Posterior vena cava (tissue), 2 donors: ENCODE measurements at regions of chr9 and their contacts with region 1.

Region 1: DNA sequence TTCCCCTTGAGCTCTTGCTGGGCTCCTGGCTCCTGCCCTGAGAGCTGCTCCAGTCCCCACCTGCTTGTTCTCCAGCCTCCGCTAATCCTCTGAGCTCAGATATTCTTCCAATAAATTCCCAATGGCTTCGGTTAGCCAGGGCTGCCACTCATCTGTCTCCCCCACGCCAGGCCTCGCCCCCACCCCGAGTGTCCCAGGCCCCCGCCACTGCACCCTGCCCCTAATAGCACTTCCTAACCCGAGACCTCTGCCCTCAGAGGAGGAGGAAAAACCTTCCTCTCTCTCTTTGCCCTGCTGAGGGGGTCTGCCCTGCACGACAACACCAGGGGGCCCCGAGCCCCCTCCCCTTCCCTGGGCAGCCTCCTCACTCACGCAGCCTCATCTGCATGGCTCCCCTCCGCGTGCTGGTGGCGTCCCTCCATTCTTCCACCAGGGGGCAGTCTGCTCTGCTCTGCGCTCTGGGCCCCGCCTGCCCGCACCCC is 5.4 kb upstream of the LCN15 start:
- DNase-seq: peak; percentile 76

Region 2: DNA sequence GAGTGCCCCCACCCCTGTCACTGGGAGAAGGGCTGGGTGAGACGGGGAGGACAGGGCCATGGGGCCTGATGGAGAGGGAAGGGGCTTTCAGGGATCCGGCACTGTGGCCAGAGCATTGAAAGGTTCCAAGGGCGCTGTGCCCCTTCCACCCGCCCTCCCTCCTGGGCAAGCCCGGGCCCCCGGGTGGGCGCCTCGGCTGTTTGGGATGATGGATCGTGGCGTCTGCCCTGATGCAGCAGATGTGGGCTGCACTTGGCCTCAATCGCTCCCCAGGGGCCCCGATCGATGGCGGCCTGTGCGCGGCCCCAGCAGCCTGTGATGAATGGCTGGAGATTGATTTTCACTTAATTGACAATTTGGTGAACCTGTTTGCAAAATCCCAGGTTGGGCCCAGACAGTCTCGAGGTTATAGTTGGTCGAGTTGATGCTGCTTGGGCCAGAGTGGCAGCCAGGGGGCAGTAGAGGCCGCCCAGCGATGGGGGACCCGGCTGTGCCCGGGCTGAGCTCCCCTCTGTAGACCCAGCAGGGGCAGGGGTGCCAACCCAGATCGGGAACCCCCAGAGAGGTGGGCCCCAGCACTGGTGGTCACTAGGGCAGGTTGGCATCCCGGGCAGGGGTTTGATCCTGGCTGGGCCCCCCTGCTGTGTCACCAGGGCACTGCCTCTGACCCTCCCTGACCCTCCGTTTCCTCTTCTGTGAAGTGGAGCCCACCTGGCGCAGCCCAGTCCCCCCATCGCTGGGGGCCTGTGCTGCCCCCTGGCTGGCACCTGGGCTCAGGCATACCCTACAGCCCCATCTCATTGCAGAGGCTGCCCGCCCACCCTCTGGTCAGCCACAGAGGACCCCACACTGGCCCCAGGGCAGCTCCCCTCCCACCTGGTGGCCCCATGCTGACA is 599.5 kb before region 1 on chr9:
- intact Hi-C with region 1: loop called in 1 of 2 experiments (anchors 10 kb)
- DNase-seq: no peak

Region 3: GRCh38 chr9:136745389-136746154 is 24.2 kb before region 1 on chr9:
- intact Hi-C with region 1: loop called in 1 of 2 experiments (anchors 1 kb)
- DNase-seq: no peak